Left cardiac atrium (tissue), 4 donors: ENCODE measurements at regions of chr18 and their contacts with region 1.

Region 1: DNA sequence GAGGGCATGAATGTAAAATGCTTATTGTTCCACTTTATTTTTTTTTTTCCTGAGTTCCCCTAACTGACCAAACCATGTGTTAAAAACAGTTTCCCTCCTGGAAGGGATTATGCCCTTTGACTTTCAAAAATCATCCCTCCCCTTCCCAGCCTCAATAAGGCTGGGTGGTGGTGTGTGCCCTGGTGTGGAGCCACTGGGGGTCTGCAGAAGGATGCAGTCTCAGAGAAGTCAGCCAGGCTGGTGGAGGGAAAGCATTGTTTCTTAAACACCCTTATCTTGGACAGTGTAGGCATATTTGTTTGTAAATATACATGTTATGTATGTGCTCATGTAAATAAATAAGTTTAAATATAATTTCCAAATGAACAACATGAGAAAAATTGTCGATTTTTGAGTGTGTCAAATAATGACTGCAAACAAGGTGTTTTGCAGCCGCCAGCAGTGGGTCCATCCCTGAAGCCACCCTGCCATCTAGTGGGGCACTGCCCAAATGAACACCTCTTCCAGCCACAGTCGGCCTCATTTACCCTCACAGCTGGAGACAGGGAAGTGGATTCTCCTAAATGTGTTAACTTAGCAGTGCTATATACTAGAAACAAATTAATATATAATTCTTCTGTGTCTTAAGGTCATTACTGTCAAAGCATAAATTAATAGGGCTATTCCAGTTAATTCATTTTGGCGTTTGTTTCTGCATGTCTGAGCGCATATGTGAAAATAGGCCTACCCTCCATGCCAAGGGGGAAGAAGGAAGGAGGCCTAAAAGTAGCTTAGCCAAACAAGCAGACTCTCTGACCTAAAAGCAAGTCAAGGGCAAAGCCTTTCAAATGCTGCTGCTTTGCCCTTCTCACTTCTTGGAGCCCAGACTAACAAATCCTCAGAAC is 209.6 kb upstream of the PIK3C3 start:
- DNase-seq: peak; percentile 52
- ATAC-seq: peak; percentile 47 to 86

Region 2: DNA sequence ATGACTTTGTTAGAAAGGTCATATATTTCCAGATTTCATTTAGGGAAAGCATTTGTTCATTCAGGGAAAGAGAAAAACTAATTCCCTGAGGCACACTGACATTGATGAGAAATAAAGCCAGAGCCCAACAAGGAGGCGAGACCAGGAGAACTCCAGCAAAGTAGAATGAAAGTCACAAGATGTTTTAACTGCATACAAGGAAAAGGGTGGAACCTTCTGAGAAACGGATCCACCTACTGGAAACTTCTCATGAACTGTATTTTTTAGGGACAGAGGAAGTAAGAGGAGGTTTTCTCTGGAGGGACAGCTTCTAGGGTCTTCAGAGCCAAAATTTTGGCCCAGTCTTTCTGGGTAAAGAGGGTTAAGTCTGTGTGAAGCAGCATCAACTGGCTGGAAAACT is 338.6 kb before region 1 on chr18:
- intact Hi-C with region 1: loop called in 1 of 2 experiments (anchors 10 kb)
- DNase-seq: no peak
- ATAC-seq: no peak

Region 3: DNA sequence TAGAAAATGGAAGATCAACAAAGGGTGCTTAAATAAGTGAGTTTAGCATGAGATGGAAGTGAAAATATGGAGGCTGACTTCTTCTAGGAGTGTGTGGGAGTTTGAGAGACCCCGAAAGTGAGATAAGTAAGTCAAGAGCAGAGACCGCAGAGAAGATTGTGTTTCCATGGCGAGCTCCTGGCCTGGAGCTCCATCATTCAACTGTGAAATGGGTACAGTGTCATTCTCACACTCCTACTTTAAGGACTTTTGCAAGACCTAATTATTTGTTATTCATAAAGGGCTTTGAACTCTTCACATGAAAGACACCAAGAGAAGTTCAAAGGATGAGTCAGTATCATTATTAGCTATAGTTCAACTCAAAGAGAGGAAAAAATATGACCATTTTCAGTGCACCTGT is 75.4 kb after region 1 on chr18:
- intact Hi-C with region 1: no loop called
- DNase-seq: no peak
- ATAC-seq: no peak